Right ventricle myocardium inferior (tissue), 1 donor: ENCODE measurements at regions of chr5 and their contacts with region 1.

Region 1: DNA sequence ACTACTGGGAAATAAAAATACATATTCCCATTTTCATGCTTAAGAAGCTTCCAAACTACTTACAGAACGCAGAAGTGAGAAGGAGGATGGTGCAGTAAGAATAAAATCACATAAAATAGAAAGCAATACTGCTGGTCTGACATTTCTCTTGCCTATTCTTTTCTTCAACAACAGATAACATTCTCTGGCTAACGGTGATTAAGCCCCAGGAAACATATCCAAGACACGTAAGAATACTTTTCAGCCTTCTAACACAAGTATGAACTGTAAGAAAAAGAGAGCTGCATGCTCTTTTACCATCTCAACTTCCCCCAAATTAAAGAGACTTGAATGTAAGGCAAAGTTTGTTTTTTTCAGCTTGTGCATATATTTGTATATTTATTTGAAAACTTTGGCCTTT is 156.1 kb upstream of the TARS1 start:
- DNase-seq: no peak
- ATAC-seq: no peak

Region 2: DNA sequence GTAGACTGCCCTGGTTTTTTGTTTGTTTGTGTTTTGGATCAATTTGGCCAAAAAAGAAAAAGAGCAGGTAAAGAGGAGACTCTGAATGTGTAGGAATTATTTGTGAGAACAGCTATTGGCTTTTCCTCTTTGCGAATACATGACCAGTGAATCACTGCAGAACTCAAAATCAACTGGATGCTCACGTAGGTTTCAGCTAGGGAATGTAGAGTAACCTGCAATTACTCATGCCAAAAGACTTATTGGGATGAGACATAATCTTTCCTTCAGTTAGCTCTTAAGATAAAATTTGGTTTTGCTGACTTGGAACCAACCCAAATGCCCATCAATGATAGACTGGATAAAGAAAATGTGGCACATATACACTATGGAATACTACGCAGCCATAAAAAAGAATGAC is 225.6 kb before region 1 on chr5:
- intact Hi-C with region 1: no loop called
- DNase-seq: no peak
- ATAC-seq: no peak

Region 3: GRCh38 chr5:33166522-33166921 is 118.2 kb before region 1 on chr5:
- intact Hi-C with region 1: no loop called
- DNase-seq: peak; percentile 17
- ATAC-seq: no peak

Region 4: GRCh38 chr5:33229216-33229615 is 55.5 kb before region 1 on chr5:
- intact Hi-C with region 1: loop called (anchors 5 kb)
- DNase-seq: no peak
- ATAC-seq: peak; percentile 71

Region 5: DNA sequence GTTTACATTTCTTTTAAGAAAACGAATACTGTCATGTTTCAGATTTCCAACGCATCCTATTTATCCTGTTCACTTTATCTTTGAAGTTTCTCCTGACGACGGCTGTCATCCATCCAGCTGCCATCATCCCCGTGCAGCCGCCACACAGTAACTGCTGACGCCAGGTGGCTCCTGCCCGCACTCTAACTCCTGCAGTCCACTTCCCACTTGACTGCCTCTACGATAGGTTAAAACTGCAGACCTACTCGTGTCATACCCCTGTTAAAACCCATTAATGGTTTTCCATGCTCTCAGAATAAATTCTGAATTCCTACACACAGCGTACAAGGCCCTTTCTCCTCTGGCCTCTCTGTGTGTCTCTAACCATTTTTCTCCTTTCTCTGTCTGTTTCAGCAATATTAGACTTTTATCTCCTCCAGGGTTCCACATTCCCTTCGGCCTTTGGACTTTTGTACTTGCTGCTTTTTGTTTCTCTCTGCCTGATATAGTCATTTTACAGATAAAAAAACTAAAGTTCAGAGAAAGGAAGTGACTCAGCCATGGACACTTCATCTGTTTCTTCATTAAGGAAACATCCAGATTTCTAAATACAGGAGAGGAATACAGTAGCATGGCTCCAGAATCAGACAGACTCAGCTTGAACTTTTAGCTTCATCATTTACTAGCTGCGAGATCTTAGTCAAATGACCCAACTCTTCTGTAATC is 522.2 kb after region 1 on chr5:
- intact Hi-C with region 1: no loop called
- DNase-seq: no peak
- ATAC-seq: peak; percentile 32